ENCODE measurements at regions of chr10 and their contacts with region 1.

Region 1: DNA sequence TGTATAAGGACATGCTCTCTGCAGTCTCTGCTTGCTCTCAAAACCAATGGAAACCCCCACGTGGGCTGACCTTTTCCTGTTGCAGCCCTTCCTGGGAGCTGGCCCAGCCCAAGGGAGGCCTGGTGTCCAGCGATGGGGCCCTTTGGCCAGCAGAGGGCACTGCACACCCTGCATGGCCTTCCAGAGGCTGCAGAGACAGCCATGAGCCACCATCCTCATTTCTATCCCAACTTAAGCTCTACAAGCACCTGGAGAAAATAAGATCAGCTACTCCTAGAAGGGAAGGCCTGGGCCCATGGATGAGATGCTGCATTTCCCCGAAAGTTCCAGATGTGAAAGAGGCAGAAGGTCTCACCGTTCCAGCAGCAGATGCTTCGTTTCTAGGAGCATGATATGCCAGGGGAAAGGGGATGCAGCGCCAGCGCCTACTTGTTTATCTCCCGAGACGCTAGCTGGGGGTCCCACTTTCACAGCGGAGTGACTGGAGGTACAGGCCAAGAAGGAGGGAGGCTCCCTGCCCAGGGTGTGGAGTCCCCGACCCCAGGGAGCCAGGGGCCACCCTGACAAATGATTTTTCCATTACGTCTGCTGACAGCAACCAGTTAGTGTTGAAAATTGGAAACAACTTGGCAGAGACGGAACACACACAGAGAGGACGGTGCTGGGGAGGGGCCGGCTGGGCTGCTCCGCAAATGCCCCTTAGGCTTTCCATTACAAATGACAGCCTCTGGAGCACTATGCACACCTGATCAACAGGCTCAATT is 106.4 kb downstream of the ZRANB1 start:
- DNase-seq: peak; percentile 80
- H3K4me3 Mint-ChIP-seq: no peak overlapping the region
- H3K27ac Mint-ChIP-seq: no peak overlapping the region
- H3K4me1 Mint-ChIP-seq: no peaks in the 10 kb centered on the region
- H3K27me3 Mint-ChIP-seq: no peaks in the 10 kb centered on the region

Region 2: GRCh38 chr10:125037145-125037877 is 11.0 kb before region 1 on chr10:
- CTCF ChIA-PET with region 1: interaction called, 12 read pairs
- intact Hi-C with region 1: no loop called
- DNase-seq: no peak
- H3K4me3 Mint-ChIP-seq: no peak overlapping the region
- H3K27ac Mint-ChIP-seq: no peak overlapping the region
- H3K4me1 Mint-ChIP-seq: no peaks in the 10 kb centered on the region
- H3K27me3 Mint-ChIP-seq: peaks cover 2% of the 10 kb centered on the region

Region 3: DNA sequence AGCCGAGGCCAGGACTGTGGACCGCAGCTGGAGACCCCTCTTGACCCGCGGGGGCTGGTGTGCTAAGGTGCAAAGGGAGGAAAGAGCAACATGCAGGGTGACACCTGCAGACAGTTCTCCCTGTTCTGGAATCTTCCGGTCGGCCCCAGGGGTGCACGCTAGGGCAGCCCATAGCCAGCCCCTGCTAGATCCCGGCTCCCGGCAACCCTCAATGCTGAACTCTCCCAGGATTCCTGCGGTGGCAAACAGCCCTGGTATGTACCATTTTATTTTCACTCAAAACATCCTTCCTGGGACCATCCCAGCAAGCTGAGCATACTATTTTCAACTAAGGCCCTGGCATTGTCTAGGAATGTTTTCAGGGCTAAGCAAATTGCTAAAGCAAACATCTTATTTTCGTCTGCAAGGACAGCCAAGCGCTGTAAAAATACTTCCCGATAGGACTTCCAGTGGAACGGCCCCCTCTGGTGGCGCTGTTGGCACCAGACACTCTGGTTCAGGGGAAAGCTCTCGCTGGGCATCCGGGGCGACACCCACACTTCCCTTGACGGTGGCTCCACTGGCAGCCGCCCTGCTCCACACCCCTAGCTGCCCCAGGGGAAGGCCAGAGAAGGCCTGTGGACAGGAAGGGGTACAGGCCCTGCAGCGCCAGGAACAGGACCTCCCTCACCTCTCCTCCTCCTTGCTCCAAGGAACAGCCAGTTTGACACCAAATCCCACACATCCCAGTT is 12.7 kb after region 1 on chr10:
- CTCF ChIA-PET with region 1: interaction called, 18 read pairs
- intact Hi-C with region 1: no loop called
- DNase-seq: peak; percentile 68
- H3K4me3 Mint-ChIP-seq: no peak overlapping the region
- H3K27ac Mint-ChIP-seq: no peak overlapping the region
- H3K4me1 Mint-ChIP-seq: peaks cover 15% of the 10 kb centered on the region
- H3K27me3 Mint-ChIP-seq: peaks cover 13% of the 10 kb centered on the region

Region 4: GRCh38 chr10:125343118-125343925 is 295.0 kb after region 1 on chr10:
- CTCF ChIA-PET with region 1: no interaction called
- intact Hi-C with region 1: loop called (anchors 1 kb)
- DNase-seq: peak; percentile 11
- H3K4me3 Mint-ChIP-seq: no peak overlapping the region
- H3K27ac Mint-ChIP-seq: no peak overlapping the region
- H3K4me1 Mint-ChIP-seq: no peaks in the 10 kb centered on the region
- H3K27me3 Mint-ChIP-seq: peaks cover 7% of the 10 kb centered on the region

Region 5: GRCh38 chr10:125411724-125412123 is 363.4 kb after region 1 on chr10:
- CTCF ChIA-PET with region 1: no interaction called
- intact Hi-C with region 1: no loop called
- DNase-seq: no peak
- H3K4me3 Mint-ChIP-seq: no peak overlapping the region
- H3K27ac Mint-ChIP-seq: no peak overlapping the region
- H3K4me1 Mint-ChIP-seq: no peaks in the 10 kb centered on the region
- H3K27me3 Mint-ChIP-seq: no peaks in the 10 kb centered on the region

Region 6: GRCh38 chr10:125629763-125630376 is 581.6 kb after region 1 on chr10:
- CTCF ChIA-PET with region 1: no interaction called
- intact Hi-C with region 1: loop called (anchors 1 kb)
- DNase-seq: no peak
- H3K4me3 Mint-ChIP-seq: no peak overlapping the region
- H3K27ac Mint-ChIP-seq: no peak overlapping the region
- H3K4me1 Mint-ChIP-seq: no peaks in the 10 kb centered on the region
- H3K27me3 Mint-ChIP-seq: peaks cover 7% of the 10 kb centered on the region

Region 7: GRCh38 chr10:125700355-125700911 is 652.1 kb after region 1 on chr10:
- CTCF ChIA-PET with region 1: no interaction called
- intact Hi-C with region 1: loop called (anchors 5 kb)
- DNase-seq: no peak
- H3K4me3 Mint-ChIP-seq: no peak overlapping the region
- H3K27ac Mint-ChIP-seq: no peak overlapping the region
- H3K4me1 Mint-ChIP-seq: no peaks in the 10 kb centered on the region
- H3K27me3 Mint-ChIP-seq: peaks cover 2% of the 10 kb centered on the region